Right ventricle myocardium inferior (tissue), 1 donor: ENCODE measurements at regions of chr5 and their contacts with region 1.

Region 1: DNA sequence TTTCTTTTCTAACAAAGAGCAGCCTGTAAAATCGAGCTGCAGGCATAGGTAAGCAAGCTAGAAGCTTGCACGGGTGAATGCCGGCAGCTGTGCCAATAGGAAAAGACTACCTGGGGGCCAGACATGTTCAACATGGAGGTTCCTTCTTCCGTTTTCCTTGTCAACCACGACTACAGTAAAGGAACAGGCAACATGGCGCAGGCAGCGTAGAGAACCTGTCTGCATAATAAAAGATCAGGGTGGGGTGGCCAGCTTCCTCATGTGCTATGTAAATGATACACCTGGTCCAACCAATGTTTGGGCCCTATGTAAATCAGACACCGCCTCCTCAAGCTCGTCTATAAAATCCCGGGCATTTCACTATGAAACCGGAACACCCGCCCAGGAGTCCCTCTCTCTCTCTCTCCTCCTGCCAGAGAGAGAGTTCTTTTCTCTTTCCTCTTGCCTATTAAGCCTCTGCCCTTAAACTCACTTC is 103.8 kb upstream of the LIFR start:
- DNase-seq: no peak
- ATAC-seq: peak; percentile 83

Region 2: DNA sequence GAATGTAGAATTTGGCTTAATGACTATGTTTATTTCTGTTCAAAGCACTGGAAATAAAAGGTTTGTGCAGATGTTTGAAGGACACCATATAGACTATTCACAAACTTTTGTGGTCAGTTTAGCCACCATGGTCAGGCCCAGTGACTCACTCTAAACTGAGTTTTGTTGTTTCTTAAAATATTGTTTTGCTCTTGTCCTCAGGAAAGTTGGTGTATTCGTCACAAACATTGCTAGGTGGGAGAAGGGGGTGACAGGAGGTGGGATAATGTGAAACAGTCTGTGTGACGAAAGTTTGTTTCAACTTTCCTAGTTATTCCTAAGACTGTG is 68.7 kb before region 1 on chr5:
- intact Hi-C with region 1: loop called (anchors 5 kb)
- DNase-seq: no peak
- ATAC-seq: no peak

Region 3: GRCh38 chr5:38719916-38720315 is 59.7 kb after region 1 on chr5:
- intact Hi-C with region 1: no loop called
- DNase-seq: no peak
- ATAC-seq: no peak

Region 4: GRCh38 chr5:39584927-39585326 is 924.7 kb after region 1 on chr5:
- intact Hi-C with region 1: no loop called
- DNase-seq: no peak
- ATAC-seq: no peak